Head of caudate nucleus (tissue), 42 donors: ENCODE measurements at regions of chr12 and their contacts with region 1.

Region 1: DNA sequence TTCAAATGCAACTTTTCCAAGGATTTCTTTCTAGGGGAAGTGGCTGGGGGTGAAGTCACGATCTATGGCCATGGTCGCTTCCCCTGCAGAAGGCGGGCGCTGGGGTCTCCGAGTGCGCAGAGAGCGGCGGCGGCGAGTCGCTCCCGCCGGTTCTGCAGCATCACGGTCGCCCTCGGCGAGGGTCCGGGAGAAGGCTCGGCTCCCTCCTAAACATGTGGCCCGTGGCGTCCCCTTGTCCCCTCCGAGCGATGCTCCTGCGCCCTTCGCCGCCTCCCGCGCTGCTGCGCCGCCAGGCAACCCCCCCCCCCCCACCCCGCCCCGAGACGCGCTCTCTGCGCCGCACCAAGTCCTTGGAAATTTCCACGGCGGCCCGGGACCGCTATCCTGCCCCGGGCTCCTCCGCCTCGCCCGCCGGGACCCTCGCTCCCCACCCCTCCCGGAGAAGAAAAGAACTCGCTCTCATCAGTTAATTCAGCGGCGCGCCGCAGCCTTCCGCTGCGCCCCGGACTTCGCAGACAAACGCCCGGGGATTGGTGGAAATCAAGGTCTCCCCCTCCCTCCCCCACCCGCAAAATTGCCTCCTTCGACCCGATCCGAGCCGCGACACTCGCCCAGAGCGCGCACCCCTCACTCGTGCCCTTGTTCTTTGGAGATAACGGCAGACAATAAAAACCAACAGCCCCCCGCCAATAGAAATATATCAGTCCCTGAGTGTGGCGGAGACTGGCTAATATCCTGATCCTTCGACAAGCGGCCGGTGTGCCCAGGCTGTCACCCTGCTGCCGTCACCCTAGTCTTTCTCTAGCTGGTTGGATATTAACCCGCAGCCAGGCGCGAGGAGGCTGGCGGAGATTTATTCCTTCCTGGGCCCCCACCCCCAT is at the start of gene ST8SIA1:
- DNase-seq: peak; percentile 6 to 81 (median 64)

Region 2: DNA sequence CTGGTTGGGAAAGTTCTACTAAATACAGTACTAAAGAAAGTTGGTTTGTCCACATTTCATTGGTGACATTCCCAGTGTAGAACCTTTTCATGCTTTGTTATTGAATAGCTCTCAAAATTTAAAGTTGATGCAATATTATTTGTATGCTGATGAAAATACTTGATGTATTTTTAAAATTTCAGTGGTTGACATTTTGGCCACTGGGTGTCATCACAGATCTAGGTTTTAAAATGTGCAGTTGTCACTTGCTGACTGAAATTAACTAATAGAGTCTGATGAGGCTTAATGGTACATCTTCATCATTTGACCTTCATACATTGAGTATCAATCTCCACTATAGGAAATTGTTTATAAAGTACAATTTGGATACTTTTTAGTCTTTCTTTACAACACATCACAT is 251.5 kb before region 1 on chr12:
- intact Hi-C with region 1: loop called (anchors 5 kb)
- DNase-seq: peak in 15 of 42 donors; percentile 21 to 74 (median 36)

Region 3: DNA sequence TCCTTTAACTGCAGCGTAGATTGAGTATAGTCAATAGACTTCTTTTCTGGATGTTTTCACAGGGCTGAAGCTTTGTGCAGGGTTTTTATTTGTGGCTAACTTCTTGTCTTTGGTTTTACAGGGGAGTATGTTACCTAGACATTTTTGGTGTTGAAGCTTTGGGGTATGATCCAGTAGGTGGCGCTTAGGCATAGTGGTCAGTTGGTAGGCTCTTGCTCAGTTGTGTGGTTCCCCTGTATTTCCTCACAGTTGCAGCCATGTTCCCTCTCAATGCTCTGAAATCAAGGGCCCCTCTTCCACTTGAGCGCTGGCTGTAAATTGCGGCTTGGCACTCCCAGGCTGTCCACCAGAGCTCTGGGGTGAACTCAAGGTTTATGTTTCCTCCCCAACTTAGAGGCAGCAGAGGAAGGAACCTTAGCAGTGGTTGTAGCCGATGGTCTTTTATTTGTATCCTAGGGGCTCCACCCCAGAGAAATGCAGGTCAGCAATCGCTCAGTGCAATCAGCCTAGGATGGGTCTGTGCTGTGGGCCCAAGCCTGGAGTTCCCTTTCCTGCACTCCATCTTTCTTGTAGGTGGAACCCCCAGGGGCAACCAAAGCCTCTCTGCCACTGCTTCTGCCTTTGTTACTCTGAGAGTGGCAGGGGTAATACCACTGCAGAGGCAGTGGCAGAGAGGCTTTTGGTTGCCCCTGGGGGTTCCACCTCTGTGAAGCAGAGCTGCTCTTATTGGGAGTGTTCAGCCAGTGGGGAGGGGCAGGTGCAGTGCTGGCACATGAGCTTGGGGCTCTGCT is 233.5 kb before region 1 on chr12:
- intact Hi-C with region 1: loop called (anchors 5 kb)
- DNase-seq: peak in 28 of 42 donors; percentile 20 to 79 (median 47)

Region 4: GRCh38 chr12:22180705-22181104 is 153.9 kb before region 1 on chr12:
- intact Hi-C with region 1: no loop called
- DNase-seq: no peak

Region 5: DNA sequence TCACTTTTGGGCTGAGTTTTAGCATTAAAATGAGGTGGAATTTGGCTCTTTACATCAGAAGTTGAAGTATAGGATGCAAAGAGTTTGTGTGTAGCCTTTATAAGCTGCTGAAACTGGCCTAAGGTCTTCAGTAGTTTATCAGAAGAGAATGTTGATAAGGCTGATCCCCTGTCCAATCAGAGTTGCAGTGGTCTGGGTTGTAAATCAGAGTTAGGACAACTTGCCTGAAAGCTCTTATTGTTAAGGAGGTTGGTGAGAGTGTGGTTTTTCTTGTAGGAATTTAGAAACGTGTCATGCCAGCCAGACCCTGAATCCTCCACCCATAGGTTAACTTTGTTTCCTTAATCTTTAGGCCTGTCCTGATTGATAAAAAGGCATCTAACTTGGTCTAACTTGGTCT is 143.7 kb before region 1 on chr12:
- intact Hi-C with region 1: no loop called
- DNase-seq: no peak

Region 6: DNA sequence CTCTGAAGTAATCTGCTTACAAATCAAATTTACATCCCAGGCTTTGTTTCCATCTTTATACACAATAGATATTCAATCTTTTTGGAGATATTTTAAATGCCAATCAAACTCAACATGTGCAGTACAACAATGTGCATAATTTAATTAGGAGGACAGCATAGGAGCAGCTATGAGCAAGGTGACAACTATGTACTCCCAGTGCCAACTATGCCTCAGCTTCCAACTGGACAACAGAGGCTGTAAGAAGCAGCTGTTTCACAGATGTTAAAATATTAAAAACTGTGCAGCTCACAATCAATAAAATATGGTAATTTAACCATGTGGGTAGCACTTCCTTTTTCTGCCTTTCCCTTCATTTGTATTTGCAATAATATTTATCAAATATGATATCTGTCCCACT is 100.1 kb before region 1 on chr12:
- intact Hi-C with region 1: no loop called
- DNase-seq: no peak

Region 7: DNA sequence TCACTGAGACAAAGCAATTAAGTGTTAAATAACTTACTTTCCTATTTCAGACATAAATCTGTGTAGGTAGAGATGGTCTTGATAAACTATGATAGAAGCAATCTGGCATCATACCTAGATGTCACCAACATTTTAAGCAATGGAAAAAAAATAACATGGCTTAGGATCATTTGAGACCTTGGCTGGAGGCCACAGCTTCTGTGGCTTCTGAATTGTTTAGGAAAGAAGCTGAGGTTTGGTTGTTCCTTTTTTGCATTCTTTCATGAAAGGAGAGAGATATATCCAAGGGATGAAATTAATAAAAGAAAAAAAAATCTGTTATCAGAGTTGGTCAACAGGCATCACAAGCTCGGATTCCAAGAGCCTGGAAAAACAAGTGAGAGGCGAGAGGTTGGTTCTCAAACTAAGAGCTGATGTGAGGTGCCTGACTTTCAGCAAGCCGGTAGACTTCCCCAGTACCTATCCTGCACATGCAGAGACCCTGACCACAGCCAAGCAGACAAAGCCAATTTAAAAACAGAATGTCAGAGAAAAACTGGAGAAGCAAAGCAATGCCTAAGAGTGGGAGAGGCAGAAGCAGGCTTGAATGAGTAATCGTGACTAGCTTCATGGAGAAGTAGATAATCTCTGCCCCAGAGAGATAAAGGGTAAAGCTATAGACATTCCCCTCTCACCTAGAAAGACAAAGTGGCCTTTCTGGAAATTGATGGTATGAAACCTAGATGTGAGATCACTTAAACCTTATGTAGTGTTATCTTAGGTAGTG is 43.3 kb after region 1 on chr12:
- intact Hi-C with region 1: no loop called
- DNase-seq: no peak